ENCODE measurements at regions of chr1 and their contacts with region 1.

Region 1: GRCh38 chr1:152654110-152654509 is 9.1 kb upstream of the LCE2D start:
- DNase-seq: peak in 1 of 2 donors; percentile 22
- H3K4me3 ChIP-seq: no peak overlapping the region
- CTCF ChIP-seq: no peak
- POLR2A ChIP-seq: no peak

Region 2: GRCh38 chr1:152514715-152515433 is 139.2 kb before region 1 on chr1:
- intact Hi-C with region 1: no loop called
- DNase-seq: no peak
- H3K4me3 ChIP-seq: no peak overlapping the region
- CTCF ChIP-seq: no peak
- POLR2A ChIP-seq: no peak

Region 3: GRCh38 chr1:152941021-152941711 is 287.1 kb after region 1 on chr1:
- intact Hi-C with region 1: loop called (anchors 10 kb)
- DNase-seq: peak in 1 of 2 donors; percentile 31
- H3K4me3 ChIP-seq: no peak overlapping the region
- CTCF ChIP-seq: no peak
- POLR2A ChIP-seq: no peak

Measured in lower leg skin (tissue), 4 donors.